ENCODE measurements at regions of chr22 and their contacts with region 1.

Region 1: DNA sequence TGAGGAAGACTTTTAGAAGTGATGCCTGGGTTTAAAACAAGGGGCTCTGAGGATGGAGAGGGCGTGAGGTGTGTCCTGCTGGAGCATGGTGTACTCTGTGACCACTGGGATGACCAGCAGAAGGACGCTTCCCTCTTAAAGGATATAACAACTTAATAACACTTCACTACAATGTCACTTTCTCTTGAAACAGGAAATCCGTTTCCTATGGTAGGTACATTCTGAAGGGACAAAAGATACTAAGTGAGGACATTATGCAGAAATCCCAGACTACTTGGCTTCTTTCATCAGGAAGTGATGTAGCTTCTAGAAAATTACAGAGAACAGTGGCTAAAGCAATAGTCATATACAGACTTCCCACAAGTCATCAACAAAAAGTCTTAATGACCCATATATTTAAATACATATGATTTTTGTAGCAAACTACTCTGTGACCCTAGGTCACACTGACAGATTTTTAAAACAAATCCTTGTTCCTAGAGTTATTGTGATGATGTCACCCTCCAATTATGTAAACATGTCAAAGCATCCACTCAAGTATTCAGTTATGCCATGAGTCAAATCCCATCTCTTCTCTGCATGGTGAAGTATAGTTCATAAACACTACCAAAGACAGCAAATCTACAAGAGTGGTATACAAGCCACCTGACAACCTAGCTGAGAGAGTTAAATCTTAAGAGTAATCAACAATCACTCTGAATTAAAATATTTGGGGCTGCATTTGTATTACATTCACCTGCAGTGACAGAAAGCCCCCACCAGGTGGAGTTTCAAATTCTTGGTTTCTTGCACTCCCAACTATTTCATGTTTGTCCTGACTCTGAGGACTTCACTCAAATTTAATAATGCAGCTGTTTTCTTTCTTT is 32.8 kb downstream of the PITPNB start:
- DNase-seq: no peak
- ATAC-seq: peak; percentile 70
- H3K4me3 ChIP-seq: no peak overlapping the region
- H3K27ac ChIP-seq: no peak overlapping the region
- H3K4me1 ChIP-seq: peaks cover 28% of the 10 kb centered on the region
- H3K27me3 ChIP-seq: no peaks in the 10 kb centered on the region
- CTCF ChIP-seq: peak; percentile 89

Region 2: GRCh38 chr22:27836196-27836595 is 50.0 kb before region 1 on chr22:
- intact Hi-C with region 1: no loop called
- DNase-seq: no peak
- ATAC-seq: no peak
- H3K4me3 ChIP-seq: no peak overlapping the region
- H3K27ac ChIP-seq: no peak overlapping the region
- H3K4me1 ChIP-seq: no peaks in the 10 kb centered on the region
- H3K27me3 ChIP-seq: no peaks in the 10 kb centered on the region
- CTCF ChIP-seq: no peak

Region 3: DNA sequence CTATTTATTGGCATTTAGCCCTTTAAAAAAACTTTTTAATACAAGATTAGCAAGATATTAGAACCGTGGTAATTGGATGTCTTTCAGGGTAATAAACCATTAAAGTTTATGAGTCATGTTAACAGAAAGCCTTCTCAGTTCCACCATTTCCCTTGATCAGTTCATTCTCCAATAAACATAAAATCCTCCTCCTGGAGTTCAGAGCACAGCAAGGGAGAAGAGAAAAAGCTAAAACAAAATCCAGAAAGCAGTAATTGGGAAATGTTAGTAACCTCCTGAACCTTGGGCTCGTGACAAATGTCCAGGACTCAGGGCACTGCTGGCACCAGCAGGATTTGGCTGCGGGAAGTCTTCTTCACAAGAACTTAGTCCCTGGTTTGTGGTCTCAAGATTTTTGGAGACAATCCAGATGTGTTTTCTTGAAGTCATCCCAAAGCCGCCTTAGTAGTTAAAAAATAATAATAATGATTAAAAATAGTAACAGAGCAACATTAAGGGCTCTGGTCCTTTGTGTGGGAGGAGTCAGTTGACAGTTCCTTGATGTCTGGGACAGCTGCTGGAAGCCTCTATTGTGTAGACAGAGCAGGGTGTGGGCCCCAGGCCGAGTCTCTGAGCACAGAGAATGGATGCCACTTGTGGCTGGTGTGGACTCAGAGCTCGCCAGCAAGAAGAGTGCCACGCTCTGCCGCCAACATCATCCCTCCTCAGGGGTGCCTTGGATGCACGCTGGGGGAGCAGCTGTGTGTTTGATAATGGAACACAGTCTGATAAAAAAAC is 76.2 kb after region 1 on chr22:
- intact Hi-C with region 1: no loop called
- DNase-seq: no peak
- ATAC-seq: no peak
- H3K4me3 ChIP-seq: no peak overlapping the region
- H3K27ac ChIP-seq: no peak overlapping the region
- H3K4me1 ChIP-seq: no peaks in the 10 kb centered on the region
- H3K27me3 ChIP-seq: no peaks in the 10 kb centered on the region
- CTCF ChIP-seq: no peak

Region 4: GRCh38 chr22:28009272-28009827 is 123.1 kb after region 1 on chr22:
- intact Hi-C with region 1: loop called (anchors 5 kb)
- DNase-seq: peak; percentile 85
- ATAC-seq: peak; percentile 90
- H3K4me3 ChIP-seq: no peak overlapping the region
- H3K27ac ChIP-seq: no peak overlapping the region
- H3K4me1 ChIP-seq: no peaks in the 10 kb centered on the region
- H3K27me3 ChIP-seq: no peaks in the 10 kb centered on the region
- CTCF ChIP-seq: peak; percentile 95